K562 (cell line): ENCODE measurements at regions of chr6 and their contacts with region 1.

Region 1: DNA sequence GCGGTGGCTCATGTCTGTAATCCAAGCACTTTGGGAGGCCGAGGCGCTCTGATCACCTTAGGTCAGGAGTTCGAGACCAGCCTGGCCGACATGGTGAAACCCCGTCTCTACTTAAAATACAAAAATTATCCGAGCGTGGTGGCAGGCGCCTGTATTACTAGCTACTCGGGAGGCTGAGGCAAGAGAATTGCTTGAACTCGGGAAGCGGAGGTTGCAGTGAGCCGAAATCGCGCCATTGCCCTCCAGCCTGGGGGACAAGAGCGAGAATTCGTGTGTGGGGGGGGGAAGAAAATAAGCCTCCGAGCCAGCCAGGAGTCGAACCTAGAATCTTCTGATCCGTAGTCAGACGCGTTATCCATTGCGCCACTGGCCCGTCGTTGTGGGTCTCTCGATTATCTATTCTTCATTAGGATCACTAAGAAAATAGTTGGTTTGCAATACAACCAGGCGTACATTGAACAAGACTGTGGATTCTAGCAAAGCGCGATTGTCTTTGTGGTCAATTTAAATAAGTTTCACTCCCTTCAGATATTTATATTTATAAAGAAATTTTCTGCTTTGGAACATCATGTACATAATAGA is 33.9 kb upstream of the PRSS16 start:
- DNase-seq: peak; percentile 55 to 88 (median 66)
- ATAC-seq: peak; percentile 71
- H3K4me3 ChIP-seq: peak overlapping the region; percentile 55
- H3K27ac ChIP-seq: peak overlapping the region; percentile 61
- H3K4me1 ChIP-seq: peaks cover 6 to 16% of the 10 kb centered on the region in 2 experiments; a peak in 4 of 5 replicates
- H3K27me3 ChIP-seq: no peaks in the 10 kb centered on the region
- CTCF ChIP-seq: no peak
- EP300 ChIP-seq: peak; percentile 48; the same call in 1 of the 2 replicates
- POLR2A ChIP-seq: no peak
- RAD21 ChIP-seq: no peak

Region 2: GRCh38 chr6:27157459-27158315 is 55.9 kb before region 1 on chr6:
- CTCF ChIA-PET with region 1: interaction called, 3 read pairs
- POLR2A ChIA-PET with region 1: no interaction called
- in situ Hi-C with region 1: no loop called
- intact Hi-C with region 1: loop called (anchors 1 kb)
- DNase-seq: peak; percentile 63 to 93 (median 70)
- ATAC-seq: peak; percentile 87
- H3K4me3 ChIP-seq: peak overlapping the region; percentile 54
- H3K27ac ChIP-seq: peak overlapping the region; percentile 46
- H3K4me1 ChIP-seq: peaks cover 10% of the 10 kb centered on the region in 2 experiments; a peak in 3 of 5 replicates
- H3K27me3 ChIP-seq: no peaks in the 10 kb centered on the region
- CTCF ChIP-seq: peak; percentile 73 to 77 (median 75)
- EP300 ChIP-seq: peak; percentile 49
- POLR2A ChIP-seq: 0 out of 2 replicates have a peak, but pooled peaks have one; percentile 12
- RAD21 ChIP-seq: peak; percentile 71 to 76

Region 3: GRCh38 chr6:27230758-27231111 is 17.1 kb after region 1 on chr6:
- CTCF ChIA-PET with region 1: interaction called, 4 read pairs
- POLR2A ChIA-PET with region 1: interaction called, 4 read pairs
- in situ Hi-C with region 1: no loop called
- intact Hi-C with region 1: loop called (anchors 1 kb)
- DNase-seq: peak in 1 of 4 experiments; percentile 36
- ATAC-seq: peak; percentile 10
- H3K4me3 ChIP-seq: peak overlapping the region; percentile 47
- H3K27ac ChIP-seq: peak overlapping the region; percentile 48; the same call in 2 of the 3 replicates
- H3K4me1 ChIP-seq: no peaks in the 10 kb centered on the region; a peak in 1 of 5 replicates
- H3K27me3 ChIP-seq: no peaks in the 10 kb centered on the region
- CTCF ChIP-seq: no peak
- EP300 ChIP-seq: no peak
- POLR2A ChIP-seq: no peak
- RAD21 ChIP-seq: no peak

Region 4: GRCh38 chr6:27295301-27296081 is 81.9 kb after region 1 on chr6:
- CTCF ChIA-PET with region 1: no interaction called
- POLR2A ChIA-PET with region 1: no interaction called
- in situ Hi-C with region 1: no loop called
- intact Hi-C with region 1: loop called (anchors 2 kb)
- DNase-seq: peak; percentile 65 to 93 (median 72)
- ATAC-seq: peak; percentile 67
- H3K4me3 ChIP-seq: peak overlapping the region; percentile 67
- H3K27ac ChIP-seq: peak overlapping the region; percentile 17; the same call in 2 of the 3 replicates
- H3K4me1 ChIP-seq: peaks cover 4 to 14% of the 10 kb centered on the region in 2 experiments; a peak in 3 of 5 replicates
- H3K27me3 ChIP-seq: no peaks in the 10 kb centered on the region
- CTCF ChIP-seq: no peak
- EP300 ChIP-seq: no peak; the same call in none of the 2 replicates
- POLR2A ChIP-seq: no peak
- RAD21 ChIP-seq: peak in 1 of 2 experiments; percentile 22; a peak in 2 of 4 replicates

Region 5: GRCh38 chr6:27472617-27473400 is 259.2 kb after region 1 on chr6 and contains the start of gene ZNF184:
- CTCF ChIA-PET with region 1: interaction called, 5 read pairs
- POLR2A ChIA-PET with region 1: interaction called, 3 read pairs
- in situ Hi-C with region 1: no loop called
- intact Hi-C with region 1: loop called (anchors 2 kb)
- DNase-seq: peak; percentile 97 to 100 (median 98)
- ATAC-seq: peak; percentile 91
- H3K4me3 ChIP-seq: peak within 1 kb of the TSS; percentile 75
- H3K27ac ChIP-seq: peak within 1 kb of the TSS; percentile 91
- H3K4me1 ChIP-seq: peaks cover 8 to 11% of the 10 kb centered on the region in 2 experiments; a peak in 4 of 5 replicates
- H3K27me3 ChIP-seq: no peaks in the 10 kb centered on the region
- CTCF ChIP-seq: peak; percentile 31 to 42 (median 37); a peak in 5 of 6 replicates
- EP300 ChIP-seq: peak; percentile 92
- POLR2A ChIP-seq: peak; percentile 92
- RAD21 ChIP-seq: peak; percentile 10 to 18; a peak in 2 of 4 replicates
- polyA plus RNA-seq, gene ZNF184: 7.6 to 12.8 TPM

Region 6: GRCh38 chr6:27687154-27688013 is 473.7 kb after region 1 on chr6:
- CTCF ChIA-PET with region 1: no interaction called
- POLR2A ChIA-PET with region 1: interaction called, 4 read pairs
- in situ Hi-C with region 1: no loop called
- intact Hi-C with region 1: loop called (anchors 5 kb)
- DNase-seq: peak; percentile 78 to 97 (median 82)
- ATAC-seq: peak; percentile 89
- H3K4me3 ChIP-seq: peak overlapping the region; percentile 63
- H3K27ac ChIP-seq: peak overlapping the region; percentile 78
- H3K4me1 ChIP-seq: peaks cover 5 to 24% of the 10 kb centered on the region in 2 experiments; a peak in 4 of 5 replicates
- H3K27me3 ChIP-seq: no peaks in the 10 kb centered on the region
- CTCF ChIP-seq: peak; percentile 92 to 96 (median 95)
- EP300 ChIP-seq: 0 out of 2 replicates have a peak, but pooled peaks have one; percentile 14
- POLR2A ChIP-seq: no peak
- RAD21 ChIP-seq: peak; percentile 71 to 87